Naive thymus-derived CD4-positive, alpha-beta T cell (primary cell): ENCODE measurements at regions of chr14 and their contacts with region 1.

Region 1: DNA sequence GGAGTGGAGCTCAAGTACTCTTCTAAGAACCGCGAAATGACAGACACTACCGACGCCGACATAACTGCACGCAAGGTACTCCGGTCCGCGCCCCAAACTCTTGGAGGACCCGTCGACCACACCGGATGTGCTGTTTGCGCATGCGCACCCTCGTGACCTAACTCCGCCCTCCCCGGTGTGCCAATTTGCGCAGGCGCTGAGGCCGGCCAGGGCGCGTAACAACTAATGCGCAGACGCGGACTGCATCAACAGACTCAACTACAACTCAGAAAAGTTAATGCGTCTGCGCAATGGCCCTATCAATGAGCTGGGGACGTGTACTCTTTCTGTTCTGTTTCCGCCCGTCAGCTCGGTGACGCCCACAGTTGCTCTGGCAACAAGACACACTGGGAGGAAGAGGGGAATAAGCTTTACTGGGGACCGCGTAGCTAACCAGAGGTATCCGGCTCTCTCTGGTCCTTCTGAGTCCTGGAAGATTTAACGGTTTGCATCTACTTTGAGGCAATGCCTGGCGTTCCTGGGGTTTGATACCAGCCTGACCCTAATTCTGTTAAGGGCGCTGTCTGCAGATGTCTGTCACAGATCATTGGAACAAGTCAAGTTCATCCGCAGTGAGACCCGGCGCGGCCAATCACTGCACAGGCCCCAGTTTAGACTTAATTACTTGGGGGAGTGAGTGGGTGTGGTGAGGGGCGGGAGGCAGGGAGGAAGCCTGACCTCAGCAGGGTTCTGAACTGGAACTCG is at the start of gene DAD1:
- DNase-seq: peak; percentile 100
- ATAC-seq: peak; percentile 94
- H3K4me3 ChIP-seq: peak within 1 kb of the TSS; percentile 81
- H3K4me3 Mint-ChIP-seq: peak within 1 kb of the TSS; percentile 83 to 99 (median 96)
- H3K27ac ChIP-seq: peak within 1 kb of the TSS; percentile 96
- H3K27ac Mint-ChIP-seq: peak within 1 kb of the TSS; percentile 90 to 100 (median 99)
- H3K4me1 ChIP-seq: peaks cover 30 to 38% of the 10 kb centered on the region in 2 donors
- H3K4me1 Mint-ChIP-seq: peaks cover 34 to 62% (median 53%) of the 10 kb centered on the region in 7 donors
- H3K27me3 ChIP-seq: no peaks in the 10 kb centered on the region
- H3K27me3 Mint-ChIP-seq: peaks cover 0 to 17% (median 0%) of the 10 kb centered on the region in 5 donors
- total RNA-seq, gene DAD1: 68.8 to 157 (median 117) TPM

Region 2: GRCh38 chr14:21476925-21477681 is 1112.2 kb before region 1 on chr14 and contains the starts of genes RAB2B and TOX4:
- CTCF ChIA-PET with region 1: no interaction called
- POLR2A ChIA-PET with region 1: no interaction called
- intact Hi-C with region 1: loop called in 1 of 2 experiments (anchors 2 kb)
- DNase-seq: peak; percentile 83 to 98 (median 97)
- ATAC-seq: peak; percentile 99
- H3K4me3 ChIP-seq: peak within 1 kb of the TSS; percentile 99
- H3K4me3 Mint-ChIP-seq: peak within 1 kb of the TSS; percentile 96 to 100 (median 99)
- H3K27ac ChIP-seq: peak within 1 kb of the TSS; percentile 88
- H3K27ac Mint-ChIP-seq: peak within 1 kb of the TSS; percentile 93 to 100 (median 98)
- H3K4me1 ChIP-seq: peaks cover 21 to 22% of the 10 kb centered on the region in 2 donors
- H3K4me1 Mint-ChIP-seq: peaks cover 18 to 74% (median 58%) of the 10 kb centered on the region in 7 donors
- H3K27me3 ChIP-seq: no peaks in the 10 kb centered on the region
- H3K27me3 Mint-ChIP-seq: no peaks in the 10 kb centered on the region
- total RNA-seq, gene RAB2B: 26.6 to 32.8 (median 30.5) TPM
- total RNA-seq, gene TOX4: 78.5 to 116 (median 86.5) TPM

Region 3: GRCh38 chr14:22653012-22653621 is 63.8 kb after region 1 on chr14:
- CTCF ChIA-PET with region 1: interaction called, 8 read pairs
- POLR2A ChIA-PET with region 1: interaction called, 3 read pairs
- intact Hi-C with region 1: loop called (anchors 5 kb)
- DNase-seq: peak; percentile 17 to 54 (median 42)
- ATAC-seq: peak; percentile 87
- H3K4me3 ChIP-seq: no peak overlapping the region
- H3K4me3 Mint-ChIP-seq: no peak overlapping the region
- H3K27ac ChIP-seq: no peak overlapping the region
- H3K27ac Mint-ChIP-seq: no peak overlapping the region
- H3K4me1 ChIP-seq: no peaks in the 10 kb centered on the region
- H3K4me1 Mint-ChIP-seq: peaks cover 0 to 3% (median 0%) of the 10 kb centered on the region in 7 donors
- H3K27me3 ChIP-seq: no peaks in the 10 kb centered on the region
- H3K27me3 Mint-ChIP-seq: no peaks in the 10 kb centered on the region

Region 4: GRCh38 chr14:22766456-22767322 is 177.4 kb after region 1 on chr14 and contains the start of gene OXA1L:
- CTCF ChIA-PET with region 1: interaction called, 3 read pairs
- POLR2A ChIA-PET with region 1: interaction called, 11 read pairs
- intact Hi-C with region 1: loop called (anchors 1 to 5 kb)
- DNase-seq: peak; percentile 86 to 99 (median 96)
- ATAC-seq: peak; percentile 96
- H3K4me3 ChIP-seq: peak within 1 kb of the TSS; percentile 93
- H3K4me3 Mint-ChIP-seq: peak within 1 kb of the TSS; percentile 86 to 97 (median 90)
- H3K27ac ChIP-seq: peak within 1 kb of the TSS; percentile 86
- H3K27ac Mint-ChIP-seq: peak within 1 kb of the TSS; percentile 88 to 99 (median 97)
- H3K4me1 ChIP-seq: peaks cover 18 to 24% of the 10 kb centered on the region in 2 donors
- H3K4me1 Mint-ChIP-seq: peaks cover 21 to 43% (median 39%) of the 10 kb centered on the region in 7 donors
- H3K27me3 ChIP-seq: no peaks in the 10 kb centered on the region
- H3K27me3 Mint-ChIP-seq: no peaks in the 10 kb centered on the region
- total RNA-seq, gene OXA1L: 112 to 177 (median 144) TPM

Region 5: GRCh38 chr14:22852940-22853767 is 263.9 kb after region 1 on chr14:
- CTCF ChIA-PET with region 1: interaction called, 4 read pairs
- POLR2A ChIA-PET with region 1: no interaction called
- intact Hi-C with region 1: loop called in 1 of 2 experiments (anchors 5 kb)
- DNase-seq: peak; percentile 75 to 94 (median 87)
- ATAC-seq: peak; percentile 96
- H3K4me3 ChIP-seq: peak overlapping the region; percentile 74
- H3K4me3 Mint-ChIP-seq: peak overlapping the region; percentile 81 to 89 (median 86)
- H3K27ac ChIP-seq: peak overlapping the region; percentile 72
- H3K27ac Mint-ChIP-seq: peak overlapping the region in 7 of 9 donors; percentile 71 to 85 (median 81)
- H3K4me1 ChIP-seq: peaks cover 3% of the 10 kb centered on the region in 2 donors
- H3K4me1 Mint-ChIP-seq: peaks cover 8 to 30% (median 21%) of the 10 kb centered on the region in 7 donors
- H3K27me3 ChIP-seq: no peaks in the 10 kb centered on the region
- H3K27me3 Mint-ChIP-seq: peaks cover 0 to 19% (median 6%) of the 10 kb centered on the region in 5 donors

Region 6: DNA sequence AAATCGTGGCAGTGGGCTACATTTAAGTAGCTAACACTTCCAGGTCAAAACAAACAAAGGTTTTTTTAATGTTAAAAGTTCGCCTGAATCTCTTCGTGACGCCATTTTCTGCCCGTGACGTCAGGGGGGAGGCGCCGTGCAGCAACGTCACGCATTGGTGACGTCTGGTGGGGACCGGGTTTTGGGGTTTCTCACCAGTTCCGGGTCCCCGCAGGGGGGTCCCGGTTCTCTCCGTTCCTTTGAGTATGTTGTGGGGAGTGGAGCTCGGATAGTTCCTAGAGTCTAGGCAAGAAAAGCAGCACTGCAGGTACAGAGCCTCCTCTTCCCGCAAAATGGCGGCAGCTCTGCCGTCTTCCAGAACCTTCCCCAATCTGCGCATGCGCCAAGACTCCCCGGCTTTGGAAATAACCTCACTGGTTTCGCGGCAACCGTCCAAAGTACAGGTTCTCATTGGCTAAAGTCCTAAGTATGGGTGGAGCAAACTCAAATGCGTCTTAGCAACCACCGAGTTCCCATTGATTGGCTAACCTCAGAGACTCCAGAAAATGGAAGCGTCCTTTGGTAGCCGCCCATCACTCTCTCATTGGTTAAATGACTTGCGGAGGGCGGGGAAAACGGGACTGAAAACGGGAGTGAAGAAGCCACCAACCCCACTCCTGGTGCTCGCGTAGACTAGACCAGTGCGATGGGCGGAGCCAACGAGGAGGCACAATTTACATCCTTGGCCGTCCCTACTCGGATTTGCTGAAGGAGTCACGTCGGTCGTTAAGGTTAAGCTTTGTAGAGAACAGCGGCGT is 329.7 kb after region 1 on chr14 and contains the start of gene RBM23:
- CTCF ChIA-PET with region 1: no interaction called
- POLR2A ChIA-PET with region 1: interaction called, 6 read pairs
- intact Hi-C with region 1: loop called (anchors 1 to 5 kb)
- DNase-seq: peak; percentile 98 to 100 (median 100)
- ATAC-seq: peak; percentile 92
- H3K4me3 ChIP-seq: peak within 1 kb of the TSS; percentile 96
- H3K4me3 Mint-ChIP-seq: peak within 1 kb of the TSS; percentile 93 to 100 (median 97)
- H3K27ac ChIP-seq: peak within 1 kb of the TSS; percentile 98
- H3K27ac Mint-ChIP-seq: peak within 1 kb of the TSS; percentile 100
- H3K4me1 ChIP-seq: peaks cover 0 to 19% of the 10 kb centered on the region in 2 donors
- H3K4me1 Mint-ChIP-seq: peaks cover 18 to 56% (median 49%) of the 10 kb centered on the region in 7 donors
- H3K27me3 ChIP-seq: no peaks in the 10 kb centered on the region
- H3K27me3 Mint-ChIP-seq: peaks cover 0 to 4% (median 0%) of the 10 kb centered on the region in 5 donors
- total RNA-seq, gene RBM23: 91.9 to 140 (median 99.1) TPM

Region 7: GRCh38 chr14:23034483-23035302 is 445.4 kb after region 1 on chr14 and contains the start of gene PSMB5:
- CTCF ChIA-PET with region 1: no interaction called
- POLR2A ChIA-PET with region 1: no interaction called
- intact Hi-C with region 1: loop called in 1 of 2 experiments (anchors 1 kb)
- DNase-seq: peak; percentile 63 to 94 (median 91)
- ATAC-seq: peak; percentile 95
- H3K4me3 ChIP-seq: peak within 1 kb of the TSS; percentile 79
- H3K4me3 Mint-ChIP-seq: peak within 1 kb of the TSS; percentile 87 to 96 (median 92)
- H3K27ac ChIP-seq: peak within 1 kb of the TSS; percentile 83
- H3K27ac Mint-ChIP-seq: peak within 1 kb of the TSS; percentile 93 to 99 (median 96)
- H3K4me1 ChIP-seq: peaks cover 9 to 17% of the 10 kb centered on the region in 2 donors
- H3K4me1 Mint-ChIP-seq: peaks cover 22 to 43% (median 29%) of the 10 kb centered on the region in 7 donors
- H3K27me3 ChIP-seq: no peaks in the 10 kb centered on the region
- H3K27me3 Mint-ChIP-seq: no peaks in the 10 kb centered on the region
- total RNA-seq, gene PSMB5: 19.2 to 69.1 (median 32.8) TPM

Region 8: GRCh38 chr14:23076785-23077408 is 487.6 kb after region 1 on chr14:
- CTCF ChIA-PET with region 1: no interaction called
- POLR2A ChIA-PET with region 1: no interaction called
- intact Hi-C with region 1: no loop called
- DNase-seq: peak in 5 of 9 donors; percentile 33 to 55 (median 49)
- ATAC-seq: peak; percentile 63
- H3K4me3 ChIP-seq: no peak overlapping the region
- H3K4me3 Mint-ChIP-seq: no peak overlapping the region
- H3K27ac ChIP-seq: peak overlapping the region; percentile 3
- H3K27ac Mint-ChIP-seq: peak overlapping the region in 2 of 9 donors; percentile 47 to 57
- H3K4me1 ChIP-seq: peaks cover 1 to 2% of the 10 kb centered on the region in 2 donors
- H3K4me1 Mint-ChIP-seq: peaks cover 8 to 28% (median 17%) of the 10 kb centered on the region in 7 donors
- H3K27me3 ChIP-seq: no peaks in the 10 kb centered on the region
- H3K27me3 Mint-ChIP-seq: no peaks in the 10 kb centered on the region